Endothelial cell of umbilical vein (primary cell): ENCODE measurements at regions of chr6 and their contacts with region 1.

Region 1: GRCh38 chr6:15389765-15390723 is 144.2 kb downstream of the JARID2 start:
- DNase-seq: peak; percentile 73
- H3K4me3 ChIP-seq: no peak overlapping the region
- H3K27ac ChIP-seq: no peak overlapping the region
- H3K4me1 ChIP-seq: no peaks in the 10 kb centered on the region
- H3K27me3 ChIP-seq: no peaks in the 10 kb centered on the region
- CTCF ChIP-seq: peak; percentile 60 to 71
- POLR2A ChIP-seq: no peak

Region 2: DNA sequence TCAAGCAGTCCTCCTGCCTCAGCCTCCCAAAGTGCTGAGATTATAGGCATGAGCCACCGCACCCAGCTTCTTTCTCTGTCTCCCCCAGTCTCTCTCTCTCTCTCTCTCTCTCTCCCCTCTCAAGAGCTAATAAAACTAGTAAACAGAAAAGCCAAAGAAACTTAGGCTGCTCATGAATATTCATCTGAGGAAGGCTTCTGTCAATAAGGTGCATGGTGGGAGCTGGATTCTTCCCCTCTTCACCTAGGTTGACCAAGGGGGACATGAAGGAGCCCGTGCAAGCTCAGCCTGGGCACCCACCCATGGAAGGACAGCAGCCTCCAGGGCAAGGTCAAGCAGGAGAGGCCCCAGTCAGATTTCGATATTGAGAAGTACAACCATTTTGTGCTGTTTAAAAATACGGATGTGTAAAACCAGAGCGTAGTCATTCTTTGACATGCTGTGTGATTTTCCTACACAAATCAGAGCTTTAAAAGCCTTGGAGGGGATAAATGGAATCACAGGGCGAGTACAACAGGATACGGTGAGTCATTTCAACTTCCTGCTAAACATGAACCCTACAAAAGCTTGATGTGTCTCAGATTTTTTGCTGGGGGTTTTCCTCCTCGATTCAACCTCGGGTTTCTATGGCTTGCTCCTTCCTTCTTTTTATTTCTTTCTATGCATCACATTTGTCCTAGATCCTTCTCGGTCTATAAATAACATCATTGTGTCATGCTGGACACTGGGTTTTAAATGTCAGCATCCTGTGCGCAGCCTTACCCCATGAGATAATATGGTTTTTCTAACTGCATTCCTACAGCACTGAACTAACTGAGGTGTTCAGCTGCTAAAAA is 513.0 kb before region 1 on chr6:
- CTCF ChIA-PET with region 1: interaction called, 5 read pairs
- POLR2A ChIA-PET with region 1: no interaction called
- dilution Hi-C with region 1: no loop called
- intact Hi-C with region 1: loop called (anchors 5 kb)
- DNase-seq: peak; percentile 88
- H3K4me3 ChIP-seq: no peak overlapping the region
- H3K27ac ChIP-seq: peak overlapping the region; percentile 49
- H3K4me1 ChIP-seq: peaks cover 37% of the 10 kb centered on the region
- H3K27me3 ChIP-seq: peaks cover 0 to 3% of the 10 kb centered on the region in 2 experiments
- CTCF ChIP-seq: no peak
- POLR2A ChIP-seq: no peak

Region 3: GRCh38 chr6:15441215-15441868 is 51.3 kb after region 1 on chr6:
- CTCF ChIA-PET with region 1: interaction called, 5 read pairs
- POLR2A ChIA-PET with region 1: no interaction called
- dilution Hi-C with region 1: no loop called
- intact Hi-C with region 1: loop called (anchors 2 kb)
- DNase-seq: peak; percentile 63
- H3K4me3 ChIP-seq: no peak overlapping the region
- H3K27ac ChIP-seq: no peak overlapping the region
- H3K4me1 ChIP-seq: peaks cover 5% of the 10 kb centered on the region
- H3K27me3 ChIP-seq: no peaks in the 10 kb centered on the region
- CTCF ChIP-seq: peak; percentile 73 to 75
- POLR2A ChIP-seq: no peak